Esophagus muscularis mucosa (tissue), 4 donors: ENCODE measurements at regions of chr17 and their contacts with region 1.

Region 1: DNA sequence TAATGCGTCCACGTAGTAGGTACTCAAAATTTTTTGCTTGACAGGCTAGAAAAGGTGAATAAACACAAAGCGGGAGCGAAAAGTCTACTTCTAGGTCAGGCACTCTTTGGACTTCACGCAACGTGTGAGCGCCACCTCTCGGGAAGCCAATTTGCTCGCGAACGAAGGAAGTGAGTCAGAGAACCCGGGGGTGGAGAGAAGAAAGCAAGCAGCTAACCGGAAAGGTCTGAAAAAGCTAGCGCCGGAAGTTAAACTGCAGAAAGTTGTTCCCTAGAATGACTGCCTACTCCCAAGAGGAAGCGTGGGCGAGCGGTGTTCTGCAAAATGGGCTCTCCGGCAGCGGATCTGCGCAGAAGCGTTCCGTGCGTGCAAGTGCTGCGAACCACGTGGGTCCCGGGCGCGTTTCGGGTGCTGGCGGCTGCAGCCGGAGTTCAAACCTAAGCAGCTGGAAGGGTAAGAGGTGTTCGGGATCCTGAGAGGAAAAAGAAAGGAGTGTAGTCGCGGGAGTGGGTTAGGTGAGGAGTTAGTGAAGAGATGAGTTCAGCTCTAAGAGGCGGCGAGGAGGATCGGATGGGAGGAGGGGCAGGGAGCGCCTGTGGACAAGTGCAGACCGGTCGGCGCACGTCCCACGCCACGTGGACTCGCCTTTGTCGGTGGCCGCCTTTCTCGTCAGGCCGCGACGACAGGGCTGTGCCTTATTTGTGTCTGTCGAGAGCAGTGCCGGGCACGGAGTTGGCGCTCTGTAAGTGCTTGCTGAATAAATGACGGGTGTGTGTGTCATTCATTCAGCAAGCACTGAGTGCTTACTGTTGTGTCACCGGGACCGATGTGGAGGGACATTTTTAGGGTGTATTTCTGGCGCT is at the start of gene NME1:
- DNase-seq: peak; percentile 99
- H3K4me3 ChIP-seq: peak within 1 kb of the TSS; percentile 69 to 80 (median 76)
- H3K27ac ChIP-seq: peak within 1 kb of the TSS; percentile 86 to 91 (median 88)
- H3K4me1 ChIP-seq: peaks cover 15 to 24% (median 19%) of the 10 kb centered on the region in 4 donors
- H3K27me3 ChIP-seq: no peaks in the 10 kb centered on the region
- CTCF ChIP-seq: peak; percentile 78 to 89 (median 79)
- EP300 ChIP-seq: no peak
- POLR2A ChIP-seq: no peak
- total RNA-seq, gene NME1: 9.1 to 32.3 (median 16.3) TPM

Region 2: GRCh38 chr17:51000835-51001638 is 152.4 kb before region 1 on chr17:
- intact Hi-C with region 1: loop called (anchors 5 kb)
- DNase-seq: no peak
- H3K4me3 ChIP-seq: no peak overlapping the region
- H3K27ac ChIP-seq: no peak overlapping the region
- H3K4me1 ChIP-seq: peaks cover 0 to 4% (median 0%) of the 10 kb centered on the region in 4 donors
- H3K27me3 ChIP-seq: no peaks in the 10 kb centered on the region
- CTCF ChIP-seq: peak; percentile 54 to 59 (median 58)
- EP300 ChIP-seq: no peak
- POLR2A ChIP-seq: no peak

Region 3: GRCh38 chr17:51056813-51057510 is 96.5 kb before region 1 on chr17:
- intact Hi-C with region 1: loop called (anchors 5 kb)
- DNase-seq: no peak
- H3K4me3 ChIP-seq: no peak overlapping the region
- H3K27ac ChIP-seq: peak overlapping the region; percentile 63 to 79 (median 68)
- H3K4me1 ChIP-seq: peaks cover 18 to 47% (median 38%) of the 10 kb centered on the region in 4 donors
- H3K27me3 ChIP-seq: no peaks in the 10 kb centered on the region
- CTCF ChIP-seq: peak; percentile 61
- EP300 ChIP-seq: no peak
- POLR2A ChIP-seq: no peak

Region 4: DNA sequence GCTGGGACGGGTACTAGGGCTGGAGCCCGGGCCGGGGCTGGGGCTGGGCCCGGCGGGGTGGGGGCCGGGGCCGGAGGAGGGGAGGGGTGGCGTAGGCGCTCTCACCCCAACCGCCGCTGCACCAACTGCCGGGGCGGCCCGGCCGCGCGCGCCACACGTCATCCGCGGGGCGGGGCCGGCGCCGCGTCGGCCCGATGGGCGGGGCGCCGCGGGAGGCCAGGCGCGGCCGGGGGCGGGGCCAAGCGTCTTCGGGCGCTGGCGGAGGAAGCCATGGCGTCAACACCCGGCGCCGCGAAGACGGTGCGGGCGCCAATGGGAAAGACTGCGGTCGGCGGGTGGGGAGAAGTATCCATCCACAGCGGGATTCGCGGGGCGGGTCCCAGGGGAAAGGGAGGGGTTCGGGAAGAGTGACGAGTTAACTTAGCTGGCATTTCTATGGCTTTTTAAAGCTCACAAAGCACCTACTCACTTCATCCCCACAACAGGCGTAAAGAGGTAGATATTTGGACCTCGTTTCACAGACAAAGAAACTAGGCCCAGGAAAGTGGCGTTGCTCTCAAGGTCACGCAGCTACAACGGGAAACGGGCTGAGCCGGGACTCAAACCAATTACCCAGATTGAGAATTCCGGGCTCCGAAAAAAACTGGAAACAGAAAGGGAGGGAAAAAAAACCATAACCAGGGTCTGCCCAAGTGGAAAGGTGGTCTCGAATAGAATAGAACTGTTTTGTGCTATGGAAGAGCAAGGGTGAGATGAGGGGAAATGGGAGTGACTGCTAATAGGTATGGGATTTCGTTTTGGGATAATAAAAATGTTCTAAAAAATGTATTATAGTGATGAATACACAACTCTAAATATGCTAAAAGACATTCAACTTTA is 32.5 kb before region 1 on chr17 and contains the start of gene SPAG9:
- intact Hi-C with region 1: loop called (anchors 2 kb)
- DNase-seq: peak; percentile 98
- H3K4me3 ChIP-seq: peak within 1 kb of the TSS; percentile 95 to 100 (median 98)
- H3K27ac ChIP-seq: peak within 1 kb of the TSS; percentile 99 to 100 (median 100)
- H3K4me1 ChIP-seq: peaks cover 23 to 50% (median 45%) of the 10 kb centered on the region in 4 donors
- H3K27me3 ChIP-seq: no peaks in the 10 kb centered on the region
- CTCF ChIP-seq: no peak
- EP300 ChIP-seq: no peak
- POLR2A ChIP-seq: peak; percentile 57
- total RNA-seq, gene SPAG9: 81.2 to 99.9 (median 89.9) TPM

Region 5: GRCh38 chr17:51319186-51319585 is 165.7 kb after region 1 on chr17:
- intact Hi-C with region 1: no loop called
- DNase-seq: no peak
- H3K4me3 ChIP-seq: no peak overlapping the region
- H3K27ac ChIP-seq: no peak overlapping the region
- H3K4me1 ChIP-seq: peaks cover 0 to 5% (median 0%) of the 10 kb centered on the region in 4 donors
- H3K27me3 ChIP-seq: no peaks in the 10 kb centered on the region
- CTCF ChIP-seq: no peak
- EP300 ChIP-seq: no peak
- POLR2A ChIP-seq: no peak